Sigmoid colon (tissue), 7 donors: ENCODE measurements at regions of chr18 and their contacts with region 1.

Region 1: DNA sequence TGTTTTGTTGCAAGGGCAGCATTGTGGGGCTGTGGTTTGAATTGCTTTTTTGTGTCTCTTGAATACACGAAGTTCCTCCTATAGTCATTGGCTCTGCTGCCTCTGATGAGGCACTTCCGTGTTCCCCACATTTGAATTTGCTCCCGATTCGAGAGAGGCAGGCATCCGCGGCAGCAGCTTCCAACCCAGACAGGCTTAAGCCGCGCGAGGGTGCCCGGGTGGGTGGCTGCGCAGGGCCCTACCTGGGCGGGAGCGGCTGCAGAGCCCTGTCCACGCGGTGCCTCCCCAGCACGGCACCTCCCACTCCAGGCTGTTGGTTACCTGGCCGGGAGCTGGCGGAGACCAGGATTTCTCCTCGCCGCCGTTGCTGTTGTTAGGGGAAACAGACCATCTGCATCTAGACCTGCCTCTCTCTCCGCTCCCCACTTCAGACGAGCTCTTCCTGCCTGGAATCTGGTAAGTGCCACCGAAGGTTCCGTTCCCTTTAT is 151.3 kb downstream of the NEDD4L start:
- DNase-seq: peak; percentile 70
- H3K4me3 ChIP-seq: peak overlapping the region; percentile 44 to 59 (median 54)
- H3K27ac ChIP-seq: peak overlapping the region; percentile 74 to 85 (median 80)
- H3K4me1 ChIP-seq: peaks cover 0 to 21% (median 16%) of the 10 kb centered on the region in 4 donors
- H3K27me3 ChIP-seq: no peaks in the 10 kb centered on the region
- CTCF ChIP-seq: no peak
- EP300 ChIP-seq: no peak
- POLR2A ChIP-seq: no peak

Region 2: GRCh38 chr18:58257461-58257860 is 62.1 kb after region 1 on chr18:
- intact Hi-C with region 1: loop called (anchors 5 kb)
- DNase-seq: no peak
- H3K4me3 ChIP-seq: no peak overlapping the region
- H3K27ac ChIP-seq: peak overlapping the region in 3 of 4 donors; percentile 43 to 81 (median 77)
- H3K4me1 ChIP-seq: peaks cover 0 to 50% (median 27%) of the 10 kb centered on the region in 4 donors
- H3K27me3 ChIP-seq: no peaks in the 10 kb centered on the region
- CTCF ChIP-seq: no peak
- EP300 ChIP-seq: no peak
- POLR2A ChIP-seq: no peak

Region 3: GRCh38 chr18:58321986-58322385 is 126.7 kb after region 1 on chr18:
- intact Hi-C with region 1: loop called (anchors 2 kb)
- DNase-seq: peak; percentile 82
- H3K4me3 ChIP-seq: no peak overlapping the region
- H3K27ac ChIP-seq: peak overlapping the region in 3 of 4 donors; percentile 39 to 56 (median 40)
- H3K4me1 ChIP-seq: peaks cover 0 to 23% (median 7%) of the 10 kb centered on the region in 4 donors
- H3K27me3 ChIP-seq: no peaks in the 10 kb centered on the region
- CTCF ChIP-seq: peak in 3 of 4 experiments; percentile 34 to 52 (median 39)
- EP300 ChIP-seq: no peak
- POLR2A ChIP-seq: no peak

Region 4: GRCh38 chr18:58392324-58393000 is 197.1 kb after region 1 on chr18:
- intact Hi-C with region 1: loop called (anchors 5 kb)
- DNase-seq: no peak
- H3K4me3 ChIP-seq: no peak overlapping the region
- H3K27ac ChIP-seq: peak overlapping the region; percentile 61 to 83 (median 72)
- H3K4me1 ChIP-seq: peaks cover 0 to 58% (median 49%) of the 10 kb centered on the region in 4 donors
- H3K27me3 ChIP-seq: no peaks in the 10 kb centered on the region
- CTCF ChIP-seq: no peak
- EP300 ChIP-seq: peak in 1 of 4 donors; percentile 53
- POLR2A ChIP-seq: no peak

Region 5: DNA sequence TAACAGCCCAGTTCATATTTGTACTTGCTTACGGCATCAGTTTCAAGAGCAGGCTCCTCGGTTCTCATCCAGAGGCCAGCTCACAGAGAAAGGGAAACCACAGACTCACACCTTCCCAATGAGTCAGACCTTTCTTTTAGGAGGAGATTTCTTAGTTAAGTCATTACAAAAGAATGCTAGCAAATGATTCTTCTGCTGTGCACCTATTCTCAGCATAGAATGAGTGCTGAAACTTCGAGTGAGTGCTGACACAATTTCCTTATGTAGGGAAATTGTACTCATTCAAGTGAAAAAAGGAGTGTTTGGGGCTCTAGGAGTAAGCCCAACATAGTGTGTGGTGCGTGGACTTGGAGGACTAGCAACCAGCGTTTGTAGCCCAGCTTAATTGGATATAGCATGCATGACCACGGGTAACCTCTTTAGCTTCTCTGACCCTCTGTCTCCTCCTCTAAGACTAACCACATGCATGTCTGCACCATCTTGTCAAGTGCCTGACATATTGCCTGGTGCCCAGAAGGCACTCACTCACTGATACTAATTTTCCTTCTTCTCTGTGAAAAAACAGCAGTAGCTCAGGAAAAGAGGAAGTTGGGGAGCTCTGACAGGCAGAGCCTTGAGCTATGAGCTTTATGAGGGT is 346.6 kb after region 1 on chr18:
- intact Hi-C with region 1: no loop called
- DNase-seq: no peak
- H3K4me3 ChIP-seq: no peak overlapping the region
- H3K27ac ChIP-seq: peak overlapping the region in 1 of 4 donors; percentile 8
- H3K4me1 ChIP-seq: peaks cover 0 to 9% (median 0%) of the 10 kb centered on the region in 4 donors
- H3K27me3 ChIP-seq: no peaks in the 10 kb centered on the region
- CTCF ChIP-seq: no peak
- EP300 ChIP-seq: no peak
- POLR2A ChIP-seq: no peak